Spleen (tissue), 13 donors: ENCODE measurements at regions of chr14 and their contacts with region 1.

Region 1: GRCh38 chr14:67111022-67111421 is 78.2 kb upstream of the GARIN2 start:
- DNase-seq: no peak
- H3K4me3 ChIP-seq: no peak overlapping the region
- H3K27ac ChIP-seq: no peak overlapping the region
- H3K4me1 ChIP-seq: no peaks in the 10 kb centered on the region
- H3K27me3 ChIP-seq: no peaks in the 10 kb centered on the region
- CTCF ChIP-seq: no peak
- POLR2A ChIP-seq: no peak

Region 2: GRCh38 chr14:66495218-66496098 is 615.6 kb before region 1 on chr14:
- intact Hi-C with region 1: loop called (anchors 10 kb)
- DNase-seq: no peak
- H3K4me3 ChIP-seq: no peak overlapping the region
- H3K27ac ChIP-seq: no peak overlapping the region
- H3K4me1 ChIP-seq: peaks cover 0 to 24% (median 5%) of the 10 kb centered on the region in 6 donors
- H3K27me3 ChIP-seq: no peaks in the 10 kb centered on the region
- CTCF ChIP-seq: peak; percentile 11 to 70 (median 60)
- POLR2A ChIP-seq: no peak

Region 3: GRCh38 chr14:67031920-67032774 is 78.9 kb before region 1 on chr14:
- intact Hi-C with region 1: no loop called
- DNase-seq: no peak
- H3K4me3 ChIP-seq: no peak overlapping the region
- H3K27ac ChIP-seq: no peak overlapping the region
- H3K4me1 ChIP-seq: no peaks in the 10 kb centered on the region
- H3K27me3 ChIP-seq: no peaks in the 10 kb centered on the region
- CTCF ChIP-seq: no peak
- POLR2A ChIP-seq: no peak

Region 4: DNA sequence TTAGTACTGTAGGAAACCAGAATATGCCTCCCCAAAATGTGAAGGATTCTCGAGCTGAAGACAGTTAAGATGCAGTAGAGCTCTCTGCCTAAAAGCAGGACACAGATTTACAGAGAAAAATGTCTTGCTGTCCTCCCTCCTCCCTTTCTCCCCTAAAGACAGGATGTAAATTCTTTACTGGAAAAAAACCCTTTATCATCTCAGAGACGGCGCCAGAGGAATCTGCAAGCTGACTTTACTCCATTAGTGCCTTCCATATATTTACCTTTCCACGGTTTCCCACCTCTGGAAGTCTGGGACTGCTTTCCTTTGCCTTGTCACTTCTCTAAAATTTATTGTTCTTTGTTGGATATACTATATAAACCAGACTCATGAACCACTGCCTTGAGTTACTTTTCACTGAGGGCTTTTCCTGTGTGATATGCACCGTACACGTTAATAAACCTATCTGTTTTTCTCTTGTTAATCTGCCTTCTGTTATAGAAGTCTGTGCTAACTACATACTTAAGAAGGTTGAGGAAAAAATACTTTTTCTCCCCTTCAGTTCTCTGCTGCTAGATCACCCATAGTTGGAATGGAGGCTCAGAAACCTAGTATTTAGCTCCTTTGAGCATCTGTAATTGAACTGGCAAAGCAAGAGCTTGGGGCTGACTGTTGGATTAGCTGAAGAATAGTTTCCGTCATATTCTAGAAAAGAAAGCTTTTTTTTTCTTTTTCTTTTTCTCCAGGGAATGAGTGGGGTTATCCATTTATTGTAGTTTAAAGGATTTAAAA is 808.4 kb after region 1 on chr14:
- intact Hi-C with region 1: no loop called
- DNase-seq: no peak
- H3K4me3 ChIP-seq: no peak overlapping the region
- H3K27ac ChIP-seq: peak overlapping the region in 2 of 8 donors; percentile 0 to 1
- H3K4me1 ChIP-seq: no peaks in the 10 kb centered on the region
- H3K27me3 ChIP-seq: no peaks in the 10 kb centered on the region
- CTCF ChIP-seq: no peak
- POLR2A ChIP-seq: no peak